ENCODE measurements at regions of chr3 and their contacts with region 1.

Region 1: GRCh38 chr3:27368831-27369607 is at the start of gene NEK10:
- DNase-seq: no peak
- ATAC-seq: peak; percentile 85
- H3K4me3 ChIP-seq: peak within 1 kb of the TSS in 1 of 2 experiments; percentile 44; a peak in 2 of 4 replicates
- H3K27ac ChIP-seq: no peak within 1 kb of the TSS
- H3K4me1 ChIP-seq: peaks cover 12% of the 10 kb centered on the region
- H3K27me3 ChIP-seq: no peaks in the 10 kb centered on the region
- CTCF ChIP-seq: no peak
- total RNA-seq, gene NEK10: 5.7 TPM

Region 2: GRCh38 chr3:27141668-27142067 is 227.4 kb before region 1 on chr3:
- CTCF ChIA-PET with region 1: no interaction called
- POLR2A ChIA-PET with region 1: no interaction called
- in situ Hi-C with region 1: no loop called
- intact Hi-C with region 1: loop called (anchors 10 kb)
- DNase-seq: no peak
- ATAC-seq: no peak
- H3K4me3 ChIP-seq: no peak overlapping the region
- H3K27ac ChIP-seq: no peak overlapping the region
- H3K4me1 ChIP-seq: no peaks in the 10 kb centered on the region
- H3K27me3 ChIP-seq: no peaks in the 10 kb centered on the region
- CTCF ChIP-seq: peak; percentile 31; the same call in 1 of the 2 replicates

Measured in Panc1 (cell line).